ENCODE measurements at regions of chr2 and their contacts with region 1.

Region 1: DNA sequence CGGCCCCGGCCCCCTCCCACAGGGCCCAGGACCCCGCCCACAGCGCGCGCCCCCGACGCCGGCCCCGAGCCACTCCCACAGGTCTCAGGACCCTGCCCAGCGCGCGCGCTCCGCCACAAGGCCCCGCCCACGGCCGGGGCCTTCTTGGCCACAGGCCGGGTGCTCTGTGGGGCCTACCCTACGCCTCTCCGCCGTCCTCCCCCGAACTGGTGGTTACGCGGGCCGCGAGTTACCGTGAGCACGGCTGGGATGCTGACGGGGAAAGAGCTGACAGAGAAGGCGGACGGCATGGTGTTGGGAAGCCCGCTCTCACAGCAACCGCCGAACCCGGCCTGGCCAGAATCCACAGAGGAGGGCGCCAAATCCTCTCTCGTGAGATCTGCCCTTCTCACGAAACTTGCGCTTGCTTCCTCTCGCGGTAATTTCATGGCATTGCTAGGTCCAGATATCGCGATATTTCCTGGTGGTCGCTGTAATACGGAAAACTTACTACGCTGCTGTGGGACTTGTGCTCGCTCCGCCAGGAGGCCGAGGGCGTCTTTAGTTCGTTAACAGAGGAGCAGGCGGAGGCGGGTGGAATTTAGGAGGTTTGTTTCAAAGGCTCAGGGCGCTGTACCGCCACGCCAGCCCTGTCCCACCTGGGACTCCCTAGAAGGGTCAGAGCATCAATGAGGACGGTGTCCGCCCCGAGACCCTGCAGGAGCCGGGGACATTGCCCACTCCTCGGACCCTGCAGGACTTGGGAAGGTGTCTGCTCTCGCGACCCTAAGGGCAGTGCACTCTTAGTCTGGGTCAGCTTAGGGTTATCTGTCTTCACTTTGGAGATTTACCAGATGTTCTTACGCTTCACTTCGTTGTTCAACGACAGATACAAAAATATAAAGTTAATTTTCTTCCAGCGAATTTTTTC is at the start of gene TMEM18:
- DNase-seq: peak in 8 of 9 donors; percentile 97 to 100 (median 99)
- ATAC-seq: peak; percentile 93
- H3K4me3 ChIP-seq: peak within 1 kb of the TSS; percentile 95
- H3K4me3 Mint-ChIP-seq: peak within 1 kb of the TSS; percentile 93 to 100 (median 98)
- H3K27ac ChIP-seq: peak within 1 kb of the TSS; percentile 100
- H3K27ac Mint-ChIP-seq: peak within 1 kb of the TSS; percentile 95 to 100 (median 99)
- H3K4me1 ChIP-seq: peaks cover 0 to 4% of the 10 kb centered on the region in 2 donors
- H3K4me1 Mint-ChIP-seq: peaks cover 23 to 49% (median 40%) of the 10 kb centered on the region in 7 donors
- H3K27me3 ChIP-seq: no peaks in the 10 kb centered on the region
- H3K27me3 Mint-ChIP-seq: no peaks in the 10 kb centered on the region
- total RNA-seq, gene TMEM18: 23.3 to 39.8 (median 33.2) TPM

Region 2: GRCh38 chr2:429575-430254 is 247.6 kb before region 1 on chr2:
- CTCF ChIA-PET with region 1: no interaction called
- POLR2A ChIA-PET with region 1: no interaction called
- intact Hi-C with region 1: loop called (anchors 5 kb)
- DNase-seq: peak in 4 of 9 donors; percentile 7 to 28 (median 16)
- ATAC-seq: peak; percentile 72
- H3K4me3 ChIP-seq: peak overlapping the region; percentile 56
- H3K4me3 Mint-ChIP-seq: peak overlapping the region; percentile 49 to 91 (median 80)
- H3K27ac ChIP-seq: peak overlapping the region; percentile 46
- H3K27ac Mint-ChIP-seq: peak overlapping the region; percentile 57 to 96 (median 83)
- H3K4me1 ChIP-seq: peaks cover 19% of the 10 kb centered on the region in 2 donors
- H3K4me1 Mint-ChIP-seq: peaks cover 19 to 36% (median 24%) of the 10 kb centered on the region in 7 donors
- H3K27me3 ChIP-seq: no peaks in the 10 kb centered on the region
- H3K27me3 Mint-ChIP-seq: peaks cover 0 to 4% (median 2%) of the 10 kb centered on the region in 5 donors

Region 3: DNA sequence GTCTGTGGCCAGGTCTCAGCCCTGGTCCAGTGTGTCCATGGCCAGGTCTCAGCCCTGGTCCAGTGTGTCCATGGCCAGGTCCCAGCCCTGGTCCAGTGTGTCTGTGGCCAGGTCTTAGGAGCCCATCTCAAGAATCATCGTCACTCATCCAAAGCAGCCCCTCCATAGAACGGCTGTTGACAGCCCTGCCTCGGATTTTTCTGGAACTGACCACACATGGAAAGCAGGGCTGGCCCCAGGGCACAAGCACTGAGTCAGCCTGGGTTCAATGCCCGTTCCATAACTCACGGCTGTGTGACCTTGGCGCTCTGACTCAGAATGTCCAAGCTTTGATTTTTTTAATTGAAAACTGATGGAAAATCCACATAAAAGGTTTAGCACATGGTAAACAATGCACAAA is 213.5 kb after region 1 on chr2:
- CTCF ChIA-PET with region 1: no interaction called
- POLR2A ChIA-PET with region 1: no interaction called
- intact Hi-C with region 1: no loop called
- DNase-seq: no peak
- ATAC-seq: no peak
- H3K4me3 ChIP-seq: no peak overlapping the region
- H3K4me3 Mint-ChIP-seq: no peak overlapping the region
- H3K27ac ChIP-seq: no peak overlapping the region
- H3K27ac Mint-ChIP-seq: no peak overlapping the region
- H3K4me1 ChIP-seq: no peaks in the 10 kb centered on the region
- H3K4me1 Mint-ChIP-seq: peaks cover 0 to 13% (median 0%) of the 10 kb centered on the region in 7 donors
- H3K27me3 ChIP-seq: peaks cover 0 to 8% of the 10 kb centered on the region in 2 donors
- H3K27me3 Mint-ChIP-seq: peaks cover 11 to 47% (median 20%) of the 10 kb centered on the region in 5 donors

Region 4: GRCh38 chr2:950080-950966 is 273.0 kb after region 1 on chr2 and contains the start of gene SNTG2:
- CTCF ChIA-PET with region 1: no interaction called
- POLR2A ChIA-PET with region 1: no interaction called
- intact Hi-C with region 1: loop called (anchors 2 kb)
- DNase-seq: peak; percentile 11 to 75 (median 53)
- ATAC-seq: peak; percentile 91
- H3K4me3 ChIP-seq: no peak within 1 kb of the TSS
- H3K4me3 Mint-ChIP-seq: peak within 1 kb of the TSS; percentile 68 to 89 (median 84)
- H3K27ac ChIP-seq: no peak within 1 kb of the TSS
- H3K27ac Mint-ChIP-seq: peak within 1 kb of the TSS in 3 of 9 donors; percentile 45 to 75 (median 62)
- H3K4me1 ChIP-seq: peaks cover 0 to 6% of the 10 kb centered on the region in 2 donors
- H3K4me1 Mint-ChIP-seq: peaks cover 13 to 38% (median 26%) of the 10 kb centered on the region in 7 donors
- H3K27me3 ChIP-seq: peaks cover 0 to 5% of the 10 kb centered on the region in 2 donors
- H3K27me3 Mint-ChIP-seq: peaks cover 26 to 48% (median 40%) of the 10 kb centered on the region in 5 donors
- total RNA-seq, gene SNTG2: 2.5 to 4.9 (median 3.6) TPM in 4 of 5 experiments, not detected in the other

Region 5: DNA sequence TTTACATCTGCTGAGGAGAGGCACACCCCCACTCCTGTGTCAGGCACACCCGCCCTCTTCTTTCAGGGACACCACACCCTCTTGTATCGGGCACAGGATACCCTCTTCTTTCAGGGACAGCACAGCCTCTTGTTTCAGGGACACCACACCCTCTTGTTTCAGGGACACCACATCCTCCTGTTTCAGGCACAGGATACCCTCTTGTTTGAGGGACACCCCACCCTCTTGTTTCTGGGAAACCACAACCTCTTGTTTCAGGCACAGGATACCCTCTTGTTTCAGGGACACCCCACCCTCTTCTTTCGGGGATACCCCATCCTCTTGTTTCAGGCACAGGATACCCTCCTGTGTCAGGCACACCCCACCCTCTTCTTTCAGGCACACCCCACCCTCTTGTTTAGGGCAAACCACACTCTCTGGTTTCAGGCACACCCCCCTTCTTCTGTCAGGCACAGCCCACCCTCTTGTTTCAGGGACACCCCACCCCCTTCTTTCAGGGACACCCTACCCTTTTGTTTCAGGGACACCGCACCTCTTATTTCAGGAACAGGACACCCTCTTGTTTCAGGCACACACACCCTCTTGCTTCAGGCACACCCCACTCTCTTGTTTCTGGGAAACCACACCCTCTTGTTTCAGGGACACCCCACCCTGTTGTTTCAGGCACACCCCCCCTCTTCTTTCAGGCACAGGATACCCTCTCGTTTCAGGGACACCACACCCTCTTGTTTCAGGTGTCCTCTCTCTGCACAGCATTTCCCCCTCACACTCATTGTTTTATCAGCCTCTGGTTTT is 832.2 kb after region 1 on chr2:
- CTCF ChIA-PET with region 1: no interaction called
- POLR2A ChIA-PET with region 1: no interaction called
- intact Hi-C with region 1: loop called in 1 of 2 experiments (anchors 1 kb)
- DNase-seq: peak in 7 of 9 donors; percentile 38 to 86 (median 64)
- ATAC-seq: peak; percentile 86
- H3K4me3 ChIP-seq: peak overlapping the region; percentile 30
- H3K4me3 Mint-ChIP-seq: peak overlapping the region; percentile 64 to 85 (median 75)
- H3K27ac ChIP-seq: peak overlapping the region; percentile 63
- H3K27ac Mint-ChIP-seq: peak overlapping the region; percentile 86 to 97 (median 94)
- H3K4me1 ChIP-seq: peaks cover 0 to 17% of the 10 kb centered on the region in 2 donors
- H3K4me1 Mint-ChIP-seq: peaks cover 27 to 49% (median 34%) of the 10 kb centered on the region in 7 donors
- H3K27me3 ChIP-seq: no peaks in the 10 kb centered on the region
- H3K27me3 Mint-ChIP-seq: peaks cover 0 to 11% (median 0%) of the 10 kb centered on the region in 5 donors